ENCODE measurements at regions of chr11 and their contacts with region 1.

Region 1: GRCh38 chr11:36746886-36747710 is 149.1 kb upstream of the RAG2 start:
- DNase-seq: peak; percentile 91
- ATAC-seq: peak; percentile 100
- H3K4me3 Mint-ChIP-seq: no peak overlapping the region
- H3K27ac Mint-ChIP-seq: no peak overlapping the region
- H3K4me1 Mint-ChIP-seq: peaks cover 3% of the 10 kb centered on the region
- H3K27me3 Mint-ChIP-seq: peaks cover 26% of the 10 kb centered on the region

Region 2: GRCh38 chr11:36564376-36565030 is 182.6 kb before region 1 on chr11:
- CTCF ChIA-PET with region 1: interaction called, 105 read pairs
- DNase-seq: peak; percentile 61
- ATAC-seq: peak; percentile 68
- H3K4me3 Mint-ChIP-seq: peak overlapping the region; percentile 22
- H3K27ac Mint-ChIP-seq: no peak overlapping the region
- H3K4me1 Mint-ChIP-seq: peaks cover 9% of the 10 kb centered on the region
- H3K27me3 Mint-ChIP-seq: peaks cover 40% of the 10 kb centered on the region

Region 3: GRCh38 chr11:36684840-36685801 is 62.0 kb before region 1 on chr11:
- CTCF ChIA-PET with region 1: no interaction called
- DNase-seq: no peak
- ATAC-seq: no peak
- H3K4me3 Mint-ChIP-seq: no peak overlapping the region
- H3K27ac Mint-ChIP-seq: no peak overlapping the region
- H3K4me1 Mint-ChIP-seq: no peaks in the 10 kb centered on the region
- H3K27me3 Mint-ChIP-seq: peaks cover 67% of the 10 kb centered on the region

Region 4: DNA sequence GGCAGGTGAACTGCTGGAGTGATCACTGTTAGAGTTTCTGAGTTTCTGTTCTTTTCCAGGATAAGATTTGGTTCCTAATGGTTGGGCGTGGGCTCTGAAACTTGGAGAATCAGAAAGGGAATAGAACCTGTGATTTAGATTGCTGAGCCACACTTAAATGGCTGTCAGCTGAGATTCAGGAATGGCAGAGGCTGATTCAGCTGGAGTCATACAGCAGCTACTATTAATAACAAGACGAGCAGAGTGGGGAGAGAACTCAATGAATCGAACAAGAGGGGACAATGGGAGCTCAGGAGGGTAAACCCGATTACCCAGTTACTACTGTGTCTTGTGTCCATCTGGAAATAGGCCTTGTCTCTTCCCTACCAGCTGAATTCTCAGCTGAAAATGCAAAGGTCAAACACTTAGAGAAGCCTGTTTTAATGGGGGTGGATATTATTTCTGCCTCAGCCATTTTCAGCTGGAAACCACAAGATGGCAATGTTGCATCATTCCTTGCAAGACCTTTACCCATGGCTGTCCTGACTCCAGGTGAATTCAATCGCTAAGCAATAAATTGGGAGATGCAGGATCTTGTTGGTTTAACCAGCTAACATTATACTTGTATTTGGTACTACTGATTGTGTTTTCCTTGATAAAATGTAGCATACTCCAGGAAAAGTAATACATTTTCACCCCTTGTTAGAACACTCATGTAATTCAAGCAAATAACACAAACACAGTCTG is 44.6 kb before region 1 on chr11:
- CTCF ChIA-PET with region 1: interaction called, 25 read pairs
- DNase-seq: no peak
- ATAC-seq: no peak
- H3K4me3 Mint-ChIP-seq: no peak overlapping the region
- H3K27ac Mint-ChIP-seq: no peak overlapping the region
- H3K4me1 Mint-ChIP-seq: no peaks in the 10 kb centered on the region
- H3K27me3 Mint-ChIP-seq: peaks cover 21% of the 10 kb centered on the region

Region 5: GRCh38 chr11:36729825-36730224 is 17.3 kb before region 1 on chr11:
- CTCF ChIA-PET with region 1: interaction called, 22 read pairs
- DNase-seq: no peak
- ATAC-seq: no peak
- H3K4me3 Mint-ChIP-seq: no peak overlapping the region
- H3K27ac Mint-ChIP-seq: no peak overlapping the region
- H3K4me1 Mint-ChIP-seq: no peaks in the 10 kb centered on the region
- H3K27me3 Mint-ChIP-seq: peaks cover 8% of the 10 kb centered on the region

Measured in activated CD8-positive, alpha-beta memory T cell treated with anti-CD3 and anti-CD28 coated beads, Interleukin-2, amount 10 ng/mL, durations not matched to agents 7 days and 5 days (primary cell).